ENCODE measurements at regions of chr10 and their contacts with region 1.

Region 1: DNA sequence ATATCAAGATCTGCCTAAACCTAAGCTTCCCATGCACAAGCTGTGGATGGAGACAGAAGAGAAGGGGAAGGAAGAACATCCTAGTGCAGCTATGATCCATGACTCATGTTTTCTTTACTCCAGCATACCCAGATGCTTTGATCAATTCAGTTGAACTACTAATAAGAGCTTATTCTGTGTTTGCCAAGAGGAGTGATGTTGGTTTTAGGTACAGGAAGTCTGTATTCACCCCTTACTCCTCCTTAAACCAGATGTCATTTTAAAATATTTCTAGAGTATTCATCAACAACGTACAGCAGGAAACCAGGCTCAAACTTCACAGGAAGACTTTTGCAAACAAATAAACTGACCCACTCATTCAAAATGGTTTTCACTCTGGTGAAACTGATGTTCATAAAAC is 29.2 kb downstream of the PANK1 start:
- DNase-seq: peak in 1 of 35 experiments; percentile 2
- ATAC-seq: peak in 1 of 4 experiments; percentile 17
- H3K4me3 ChIP-seq: no peak overlapping the region
- H3K4me3 Mint-ChIP-seq: peak overlapping the region in 1 of 3 donors; percentile 26
- H3K27ac ChIP-seq: no peak overlapping the region
- H3K27ac Mint-ChIP-seq: peak overlapping the region in 1 of 2 donors; percentile 71
- H3K4me1 ChIP-seq: peaks cover 3 to 12% of the 10 kb centered on the region in 2 experiments
- H3K4me1 Mint-ChIP-seq: peaks cover 18 to 44% (median 29%) of the 10 kb centered on the region in 3 donors
- H3K27me3 ChIP-seq: no peaks in the 10 kb centered on the region
- H3K27me3 Mint-ChIP-seq: no peaks in the 10 kb centered on the region

Region 2: DNA sequence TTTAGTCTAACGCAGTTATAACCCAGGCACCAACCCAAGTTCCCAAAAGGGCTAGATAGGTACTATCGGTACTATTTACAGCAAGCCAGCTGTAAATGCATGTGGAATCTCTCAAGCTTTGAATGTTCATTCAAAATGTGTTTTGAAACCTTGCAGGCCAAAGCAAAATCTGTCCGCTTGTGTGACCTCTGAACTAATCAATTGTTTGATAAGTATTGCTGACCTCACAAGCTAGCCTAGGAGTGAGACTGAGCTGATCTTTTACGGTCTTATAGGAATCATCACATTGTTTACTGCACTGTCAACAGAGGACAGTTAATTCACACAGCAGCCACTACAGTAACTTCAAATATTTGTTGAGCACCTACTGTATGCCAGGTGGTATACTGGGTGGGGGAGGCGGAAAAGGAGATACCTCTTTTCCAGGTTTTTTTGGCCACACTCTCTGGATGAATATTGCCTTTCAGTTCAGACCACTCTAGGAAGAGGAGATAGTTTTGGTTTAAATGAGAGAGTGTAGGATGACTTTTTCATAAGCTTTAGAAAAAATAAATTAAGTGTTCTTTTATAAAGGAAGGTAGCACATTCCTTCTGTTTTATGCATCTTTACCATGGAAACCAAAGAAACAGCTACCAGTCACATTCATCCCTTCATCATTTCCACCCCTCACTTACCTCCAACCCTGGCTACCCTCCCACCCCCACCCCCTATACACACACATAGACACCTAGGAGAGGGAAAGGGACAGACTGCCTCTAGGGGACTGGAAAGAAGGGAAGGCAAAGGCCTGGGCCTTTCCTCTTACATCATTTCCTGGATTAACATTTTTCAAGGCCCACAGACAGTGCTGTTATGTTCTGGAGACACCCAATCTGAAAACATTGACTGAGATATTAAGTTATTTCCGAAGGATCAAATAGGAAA is 1953.7 kb before region 1 on chr10:
- CTCF ChIA-PET with region 1: no interaction called
- POLR2A ChIA-PET with region 1: interaction called in 1 of 2 experiments, 10 read pairs
- DNase-seq: no peak
- ATAC-seq: no peak
- H3K4me3 ChIP-seq: no peak overlapping the region
- H3K4me3 Mint-ChIP-seq: no peak overlapping the region
- H3K27ac ChIP-seq: no peak overlapping the region
- H3K27ac Mint-ChIP-seq: no peak overlapping the region
- H3K4me1 ChIP-seq: peaks cover 0 to 9% of the 10 kb centered on the region in 2 experiments
- H3K4me1 Mint-ChIP-seq: peaks cover 12 to 14% (median 12%) of the 10 kb centered on the region in 3 donors
- H3K27me3 ChIP-seq: peaks cover 2 to 27% of the 10 kb centered on the region in 2 experiments
- H3K27me3 Mint-ChIP-seq: peaks cover 40 to 45% of the 10 kb centered on the region in 2 donors